ENCODE measurements at regions of chr22 and their contacts with region 1.

Region 1: GRCh38 chr22:38927033-38927781 is 30.2 kb upstream of the APOBEC3A start:
- DNase-seq: peak; percentile 40 to 68
- ATAC-seq: peak; percentile 70 to 73
- H3K4me3 ChIP-seq: peak overlapping the region; percentile 19 to 40 (median 33)
- H3K27ac ChIP-seq: peak overlapping the region in 2 of 4 donors; percentile 24 to 31
- H3K4me1 ChIP-seq: peaks cover 18 to 19% of the 10 kb centered on the region in 2 donors
- H3K27me3 ChIP-seq: no peaks in the 10 kb centered on the region
- CTCF ChIP-seq: peak in 4 of 5 experiments; percentile 49 to 67 (median 52)
- POLR2A ChIP-seq: no peak

Region 2: DNA sequence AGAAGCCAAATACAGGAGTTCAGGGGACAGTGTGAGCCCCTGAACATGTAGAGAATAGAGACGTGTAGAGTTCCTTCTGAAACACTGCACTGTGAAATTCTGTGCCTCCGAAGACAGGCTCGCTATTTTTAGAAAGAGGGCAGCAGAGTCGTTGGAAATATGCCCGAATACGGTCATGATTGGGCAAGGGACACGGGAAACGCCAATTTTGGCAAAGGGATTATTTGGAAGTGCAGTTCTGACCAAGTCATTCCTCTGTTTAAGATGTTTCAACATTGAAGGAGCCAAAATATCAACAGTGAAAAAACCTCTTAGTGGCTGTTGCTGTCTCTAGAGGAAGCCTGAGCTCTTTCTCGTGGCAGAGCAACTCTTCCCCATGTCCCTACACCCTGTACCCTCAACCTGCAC is 45.7 kb before region 1 on chr22:
- in situ Hi-C with region 1: no loop called
- intact Hi-C with region 1: loop called (anchors 2 kb)
- DNase-seq: peak; percentile 55 to 75
- ATAC-seq: peak; percentile 91
- H3K4me3 ChIP-seq: peak overlapping the region in 3 of 4 donors; percentile 7 to 31 (median 11)
- H3K27ac ChIP-seq: peak overlapping the region; percentile 70 to 85 (median 76)
- H3K4me1 ChIP-seq: peaks cover 9 to 16% of the 10 kb centered on the region in 2 donors
- H3K27me3 ChIP-seq: no peaks in the 10 kb centered on the region
- CTCF ChIP-seq: no peak
- POLR2A ChIP-seq: peak in 1 of 2 donors; percentile 7

Region 3: DNA sequence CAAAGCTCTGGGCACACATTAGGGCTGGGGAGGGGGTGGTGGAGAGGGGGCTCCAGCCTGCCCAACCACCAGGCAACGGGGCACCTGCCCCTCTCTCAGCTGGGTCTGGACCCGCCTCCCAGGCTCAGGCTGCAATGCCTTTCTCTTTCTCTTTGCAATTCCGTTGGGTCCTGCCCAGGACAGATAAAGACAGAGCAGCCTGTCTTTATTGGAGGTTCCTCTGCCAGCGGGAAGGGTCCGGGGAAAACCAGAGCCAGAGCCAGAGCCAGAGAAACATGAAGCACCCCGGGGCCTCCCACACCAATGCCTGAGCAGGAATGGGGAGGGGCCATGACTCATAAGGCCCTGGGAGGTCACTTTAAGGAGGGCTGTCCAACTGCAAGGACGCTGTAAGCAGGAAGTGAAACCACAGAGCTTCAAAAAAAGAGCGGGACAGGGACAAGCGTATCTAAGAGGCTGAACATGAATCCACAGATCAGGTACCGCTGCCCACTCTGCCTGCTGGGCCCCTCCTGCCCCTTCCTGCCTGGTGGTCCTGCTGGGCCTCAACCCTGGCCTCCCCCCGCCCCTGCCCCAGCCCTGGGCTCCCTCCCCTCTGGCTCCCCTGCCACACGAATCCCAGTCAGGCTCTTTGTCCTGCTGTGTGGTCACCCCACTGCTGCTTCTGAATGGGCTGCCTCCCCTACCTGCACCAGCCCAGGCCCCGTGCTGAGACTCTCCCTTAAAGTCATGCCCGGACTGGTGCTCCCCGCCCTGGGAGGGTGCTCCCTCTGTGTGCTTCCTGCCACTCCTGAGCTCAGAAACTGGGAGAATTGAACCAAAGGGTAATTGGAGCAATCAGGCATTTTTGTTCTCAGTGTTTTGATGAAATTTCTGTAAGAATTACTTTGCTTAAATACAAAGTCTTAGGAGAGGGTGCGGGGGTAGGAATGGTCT is 55.1 kb after region 1 on chr22 and contains the start of gene APOBEC3B:
- in situ Hi-C with region 1: no loop called
- intact Hi-C with region 1: loop called (anchors 5 kb)
- DNase-seq: peak; percentile 73 to 85
- ATAC-seq: peak; percentile 98 to 100
- H3K4me3 ChIP-seq: peak within 1 kb of the TSS in 3 of 4 donors; percentile 56 to 68 (median 57)
- H3K27ac ChIP-seq: peak within 1 kb of the TSS in 2 of 4 donors; percentile 33 to 42
- H3K4me1 ChIP-seq: peaks cover 9 to 13% of the 10 kb centered on the region in 2 donors
- H3K27me3 ChIP-seq: no peaks in the 10 kb centered on the region
- CTCF ChIP-seq: no peak
- POLR2A ChIP-seq: no peak
- total RNA-seq, gene APOBEC3B: 0.62 TPM in 1 of 4 donors, not detected in the others

Region 4: GRCh38 chr22:39003165-39003638 is 76.0 kb after region 1 on chr22:
- in situ Hi-C with region 1: no loop called
- intact Hi-C with region 1: loop called (anchors 5 kb)
- DNase-seq: peak; percentile 27 to 43
- ATAC-seq: peak; percentile 68 to 77
- H3K4me3 ChIP-seq: no peak overlapping the region
- H3K27ac ChIP-seq: no peak overlapping the region
- H3K4me1 ChIP-seq: no peaks in the 10 kb centered on the region
- H3K27me3 ChIP-seq: peaks cover 0 to 5% (median 0%) of the 10 kb centered on the region in 3 donors
- CTCF ChIP-seq: peak; percentile 49 to 75 (median 65)
- POLR2A ChIP-seq: no peak